ENCODE measurements at regions of chr11 and their contacts with region 1.

Region 1: GRCh38 chr11:106585061-106585460 is 433.2 kb downstream of the GUCY1A2 start:
- DNase-seq: peak; percentile 50
- H3K4me3 ChIP-seq: no peak overlapping the region
- H3K27ac ChIP-seq: no peak overlapping the region
- H3K4me1 ChIP-seq: no peaks in the 10 kb centered on the region
- H3K27me3 ChIP-seq: no peaks in the 10 kb centered on the region
- CTCF ChIP-seq: peak; percentile 56

Region 2: GRCh38 chr11:106156290-106156937 is 428.6 kb before region 1 on chr11:
- CTCF ChIA-PET with region 1: interaction called, 8 read pairs
- POLR2A ChIA-PET with region 1: no interaction called
- intact Hi-C with region 1: loop called (anchors 5 kb)
- DNase-seq: peak; percentile 75
- H3K4me3 ChIP-seq: no peak overlapping the region
- H3K27ac ChIP-seq: no peak overlapping the region
- H3K4me1 ChIP-seq: no peaks in the 10 kb centered on the region
- H3K27me3 ChIP-seq: peaks cover 15% of the 10 kb centered on the region
- CTCF ChIP-seq: peak; percentile 78

Region 3: GRCh38 chr11:106311531-106312230 is 273.4 kb before region 1 on chr11:
- CTCF ChIA-PET with region 1: no interaction called
- POLR2A ChIA-PET with region 1: no interaction called
- intact Hi-C with region 1: loop called (anchors 10 kb)
- DNase-seq: no peak
- H3K4me3 ChIP-seq: no peak overlapping the region
- H3K27ac ChIP-seq: no peak overlapping the region
- H3K4me1 ChIP-seq: no peaks in the 10 kb centered on the region
- H3K27me3 ChIP-seq: peaks cover 28% of the 10 kb centered on the region
- CTCF ChIP-seq: no peak

Region 4: GRCh38 chr11:106627694-106628093 is 42.6 kb after region 1 on chr11:
- CTCF ChIA-PET with region 1: no interaction called
- POLR2A ChIA-PET with region 1: no interaction called
- intact Hi-C with region 1: no loop called
- DNase-seq: no peak
- H3K4me3 ChIP-seq: no peak overlapping the region
- H3K27ac ChIP-seq: no peak overlapping the region
- H3K4me1 ChIP-seq: no peaks in the 10 kb centered on the region
- H3K27me3 ChIP-seq: no peaks in the 10 kb centered on the region
- CTCF ChIP-seq: no peak

Measured in A673 (cell line).